Esophagus squamous epithelium (tissue), 5 donors: ENCODE measurements at regions of chr9 and their contacts with region 1.

Region 1: DNA sequence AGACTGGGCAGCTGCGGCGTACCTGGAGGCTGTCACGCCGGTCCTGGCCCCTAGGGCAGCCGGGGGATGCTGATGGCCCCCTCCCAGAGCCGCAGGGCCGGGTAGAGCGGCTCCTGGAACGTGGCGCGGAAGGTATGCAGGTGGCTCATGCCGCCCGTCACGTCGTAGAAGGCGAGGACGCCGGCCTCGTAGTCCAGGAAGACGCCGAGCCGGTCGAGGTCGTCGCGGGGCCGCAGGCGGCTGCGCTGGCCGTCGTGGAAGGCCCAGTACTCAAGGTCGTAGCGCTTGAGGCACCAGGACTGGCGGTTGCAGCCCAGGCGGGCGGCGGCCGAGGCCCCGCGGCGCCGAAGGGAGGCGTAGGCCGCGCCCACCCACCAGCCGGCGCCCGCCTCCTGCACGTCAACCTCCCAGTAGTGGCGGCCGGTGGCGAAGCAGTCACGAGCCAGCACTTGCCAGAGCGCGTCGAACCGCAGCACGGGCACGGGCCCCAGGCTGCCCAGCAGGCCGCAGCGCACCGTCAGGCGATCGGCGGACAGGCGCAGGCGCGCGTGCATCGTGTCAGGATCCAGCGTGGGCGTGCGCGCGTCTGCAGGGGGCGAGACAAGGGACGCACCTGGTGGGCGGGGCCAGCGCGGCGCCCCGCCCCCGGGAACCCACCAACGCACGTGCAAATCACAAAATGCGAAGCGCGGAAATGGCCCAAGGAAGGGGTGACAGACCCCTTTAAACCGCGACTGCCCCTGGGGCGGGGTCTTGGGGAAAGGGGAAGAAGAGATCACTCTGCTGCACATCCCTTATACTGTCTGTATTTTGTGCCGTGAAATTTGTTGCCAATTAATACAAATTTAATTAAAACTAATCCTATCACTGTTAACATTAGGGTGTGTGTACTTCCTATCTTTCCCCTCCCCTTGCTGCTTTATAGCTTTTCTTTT is 31.2 kb downstream of the NANS start:
- DNase-seq: no peak
- H3K4me3 ChIP-seq: peak overlapping the region; percentile 24 to 59 (median 40)
- H3K27ac ChIP-seq: peak overlapping the region; percentile 42 to 85 (median 78)
- H3K4me1 ChIP-seq: peaks cover 4 to 48% (median 6%) of the 10 kb centered on the region in 3 donors
- H3K27me3 ChIP-seq: no peaks in the 10 kb centered on the region
- CTCF ChIP-seq: peak in 2 of 6 experiments; percentile 19 to 39
- POLR2A ChIP-seq: peak in 1 of 4 donors; percentile 23

Region 2: DNA sequence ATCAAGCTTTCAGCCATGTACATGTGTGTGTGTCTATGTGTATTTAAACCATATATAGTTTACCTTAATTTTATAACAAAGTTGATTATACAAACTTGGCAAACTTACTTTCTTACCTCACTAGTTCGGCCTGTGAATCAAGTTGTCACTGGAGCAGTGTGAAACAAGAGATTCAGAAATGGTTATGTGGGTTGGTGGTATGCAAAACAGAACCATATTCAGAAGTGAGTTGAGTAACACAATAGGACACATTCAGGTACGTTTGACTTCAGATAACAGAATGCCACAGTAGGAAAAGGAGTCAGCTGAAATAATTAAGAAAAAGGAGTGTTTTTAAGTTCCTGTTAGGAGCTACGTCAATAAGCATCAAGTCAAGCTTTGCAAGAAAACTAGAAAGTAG is 412.0 kb before region 1 on chr9:
- intact Hi-C with region 1: no loop called
- DNase-seq: no peak
- H3K4me3 ChIP-seq: no peak overlapping the region
- H3K27ac ChIP-seq: no peak overlapping the region
- H3K4me1 ChIP-seq: no peaks in the 10 kb centered on the region
- H3K27me3 ChIP-seq: no peaks in the 10 kb centered on the region
- CTCF ChIP-seq: no peak
- POLR2A ChIP-seq: no peak

Region 3: DNA sequence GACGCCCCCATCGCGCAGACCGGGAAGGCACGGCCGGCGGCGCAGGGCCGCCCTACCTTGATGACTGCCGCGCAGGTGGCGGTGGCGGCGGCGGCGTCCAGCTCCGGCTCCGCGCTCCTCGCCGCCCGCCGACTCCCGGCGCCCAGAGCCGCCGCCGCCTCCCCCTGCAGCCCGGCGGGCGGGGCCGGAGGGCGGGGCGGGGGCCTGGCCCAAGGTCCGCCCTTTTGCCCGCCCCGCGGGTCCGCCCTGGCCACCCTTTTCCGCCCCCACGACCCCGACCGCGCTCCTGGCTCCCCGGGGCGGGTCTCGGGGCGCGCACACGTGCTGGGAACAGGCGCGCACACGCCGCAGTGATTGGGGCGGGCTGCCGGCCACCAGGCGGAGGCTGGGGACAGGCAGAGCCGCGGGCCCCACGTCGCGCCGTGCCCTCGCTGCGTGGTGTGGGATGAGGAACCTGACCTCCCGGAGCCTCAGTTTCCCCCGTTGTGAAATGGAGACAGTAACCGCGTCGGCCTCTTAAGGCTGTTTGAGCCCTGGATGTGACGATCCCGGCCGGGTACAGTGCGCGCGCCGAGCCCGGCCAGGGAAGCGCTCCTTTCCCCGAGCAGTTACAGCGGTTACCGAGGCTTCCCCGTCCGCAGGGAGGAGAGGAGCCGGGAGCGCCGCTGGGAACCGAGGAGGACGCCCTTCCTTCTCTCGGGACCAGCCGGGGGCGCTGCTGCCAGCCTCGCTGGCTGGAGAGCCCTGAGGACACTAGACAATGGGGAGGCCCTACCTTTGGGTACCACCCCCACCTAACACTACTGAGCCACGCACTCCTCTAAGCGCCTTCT is 105.0 kb after region 1 on chr9 and contains the start of gene CORO2A:
- intact Hi-C with region 1: loop called (anchors 10 kb)
- DNase-seq: no peak
- H3K4me3 ChIP-seq: peak within 1 kb of the TSS; percentile 53 to 75 (median 62)
- H3K27ac ChIP-seq: peak within 1 kb of the TSS; percentile 89 to 94 (median 90)
- H3K4me1 ChIP-seq: peaks cover 8 to 48% (median 20%) of the 10 kb centered on the region in 3 donors
- H3K27me3 ChIP-seq: no peaks in the 10 kb centered on the region
- CTCF ChIP-seq: peak in 4 of 6 experiments; percentile 19 to 51 (median 38)
- POLR2A ChIP-seq: peak in 2 of 4 donors; percentile 12 to 64
- total RNA-seq, gene CORO2A: 15.6 to 27.6 (median 26.1) TPM